ENCODE measurements at regions of chr5 and their contacts with region 1.

Region 1: DNA sequence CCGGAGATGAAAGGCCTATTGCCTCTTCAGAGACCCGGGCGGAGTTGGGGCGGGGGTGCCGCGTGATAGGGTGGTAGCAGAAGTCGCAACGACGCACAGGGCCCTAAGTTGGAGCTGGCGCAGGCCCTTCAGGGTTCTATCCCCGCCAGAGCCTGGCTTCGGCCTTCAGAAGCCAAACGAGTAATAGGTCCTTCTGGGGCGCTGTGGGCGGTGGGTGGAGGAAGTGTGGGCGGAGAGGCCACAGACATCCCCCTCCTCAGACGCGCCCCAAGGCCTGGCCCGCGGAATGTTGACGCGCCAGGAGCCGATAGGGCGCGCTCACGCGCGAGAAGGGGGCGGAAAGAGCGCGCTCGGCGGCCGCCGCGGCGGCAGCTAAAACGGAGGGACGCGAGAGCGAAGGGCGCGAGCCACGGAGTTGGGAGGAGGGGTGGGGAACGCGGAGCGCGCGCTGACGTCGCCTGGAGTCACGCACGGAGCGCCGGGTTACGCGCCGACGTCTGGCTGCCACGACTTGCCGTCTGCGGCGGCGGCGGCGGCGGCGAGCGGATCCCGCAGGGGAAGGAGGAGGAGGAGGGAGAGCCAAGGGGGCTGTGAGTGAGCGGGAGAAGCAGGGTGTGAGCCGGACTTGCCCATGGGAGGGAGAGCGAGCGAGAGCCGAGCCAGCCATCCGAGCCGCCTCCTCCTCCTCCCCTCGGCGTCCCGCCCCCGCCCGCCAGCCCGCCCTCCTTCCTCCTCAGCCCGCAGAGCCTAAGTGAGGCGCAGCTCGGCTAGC is 6.4 kb upstream of the PURA start:
- DNase-seq: peak; percentile 87 to 89 (median 88)
- H3K4me3 ChIP-seq: peak overlapping the region; percentile 55 to 84 (median 68)
- H3K4me3 Mint-ChIP-seq: peak overlapping the region; percentile 94 to 96
- H3K27ac ChIP-seq: peak overlapping the region; percentile 85 to 88
- H3K27ac Mint-ChIP-seq: peak overlapping the region; percentile 89 to 97 (median 93)
- H3K4me1 ChIP-seq: peaks cover 36 to 43% of the 10 kb centered on the region in 2 donors
- H3K4me1 Mint-ChIP-seq: peaks cover 45% of the 10 kb centered on the region
- H3K27me3 ChIP-seq: peaks cover 45 to 63% of the 10 kb centered on the region in 2 donors
- H3K27me3 Mint-ChIP-seq: peaks cover 48 to 65% (median 52%) of the 10 kb centered on the region in 3 donors
- CTCF ChIP-seq: no peak

Region 2: DNA sequence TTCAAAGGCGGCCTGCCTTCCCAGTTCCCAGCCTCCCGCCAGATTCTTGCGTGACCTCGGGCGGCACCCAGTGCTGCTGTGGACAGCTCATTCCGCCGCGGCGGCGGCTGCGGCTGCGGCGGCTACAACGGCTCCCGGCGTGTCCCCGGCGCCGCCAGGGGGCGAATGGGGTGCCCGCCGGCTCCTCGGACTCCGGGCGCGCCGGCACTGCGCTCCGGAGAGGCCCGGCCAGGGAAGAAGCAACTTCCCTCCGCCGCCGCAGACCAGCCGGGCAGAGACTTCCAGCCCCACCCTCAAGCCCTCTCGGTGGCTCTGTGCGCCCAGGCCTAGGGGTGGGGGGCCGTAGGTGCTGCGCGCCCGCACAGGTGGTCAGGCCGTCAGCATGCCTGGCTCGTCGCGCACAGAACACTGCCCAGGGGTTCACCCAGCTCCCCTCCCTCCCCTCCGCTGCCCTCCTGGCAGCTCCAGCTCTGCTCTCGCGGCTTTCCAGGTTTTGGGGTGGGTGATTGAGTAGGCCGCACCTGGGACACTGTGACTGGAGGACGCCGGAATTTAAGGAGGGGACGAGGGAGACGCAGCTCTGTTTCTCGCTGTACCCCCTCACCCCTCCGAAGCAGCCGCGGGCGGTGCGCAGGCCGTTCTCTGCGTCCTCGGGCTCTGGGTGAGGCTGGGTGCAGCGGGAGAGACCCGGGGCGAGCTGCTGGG is 38.5 kb after region 1 on chr5:
- intact Hi-C with region 1: loop called in 1 of 2 experiments (anchors 5 kb)
- DNase-seq: peak; percentile 69 to 81 (median 78)
- H3K4me3 ChIP-seq: peak overlapping the region; percentile 17 to 72 (median 25)
- H3K4me3 Mint-ChIP-seq: peak overlapping the region; percentile 68 to 86
- H3K27ac ChIP-seq: no peak overlapping the region
- H3K27ac Mint-ChIP-seq: no peak overlapping the region
- H3K4me1 ChIP-seq: peaks cover 15 to 20% of the 10 kb centered on the region in 2 donors
- H3K4me1 Mint-ChIP-seq: peaks cover 28% of the 10 kb centered on the region
- H3K27me3 ChIP-seq: peaks cover 25 to 39% of the 10 kb centered on the region in 2 donors
- H3K27me3 Mint-ChIP-seq: peaks cover 31 to 48% (median 47%) of the 10 kb centered on the region in 3 donors
- CTCF ChIP-seq: peak; percentile 80

Measured in CD14-positive monocyte (primary cell).